ENCODE measurements at regions of chr1 and their contacts with region 1.

Region 1: GRCh38 chr1:229856009-229856650 is 210.9 kb upstream of the GALNT2 start:
- DNase-seq: peak; percentile 55
- ATAC-seq: peak; percentile 99
- H3K4me3 Mint-ChIP-seq: peak overlapping the region; percentile 90
- H3K27ac Mint-ChIP-seq: peak overlapping the region; percentile 97
- H3K4me1 Mint-ChIP-seq: peaks cover 36% of the 10 kb centered on the region
- H3K27me3 Mint-ChIP-seq: no peaks in the 10 kb centered on the region
- CTCF ChIP-seq: no peak

Region 2: DNA sequence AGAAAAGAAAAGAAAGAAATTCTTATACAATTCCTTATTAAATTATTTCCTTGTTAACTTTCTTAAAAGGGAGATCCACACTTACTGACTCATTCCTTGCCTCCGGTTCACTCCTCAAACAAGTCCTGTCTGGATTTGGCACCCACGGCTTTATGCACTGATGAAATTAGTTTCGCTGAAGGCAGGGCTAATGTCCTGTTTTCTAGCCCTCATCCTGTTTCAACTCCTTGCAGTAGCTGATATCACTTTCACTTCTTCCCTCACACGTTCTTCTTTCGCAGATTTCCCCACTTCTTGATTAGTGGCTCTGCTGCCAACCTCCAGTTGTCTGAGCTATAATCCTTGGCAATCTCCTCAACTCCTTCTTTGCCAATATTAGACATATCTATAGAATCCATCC is 14.9 kb before region 1 on chr1:
- CTCF ChIA-PET with region 1: interaction called, 4 read pairs
- POLR2A ChIA-PET with region 1: interaction called, 3 read pairs
- intact Hi-C with region 1: loop called (anchors 2 kb)
- DNase-seq: no peak
- ATAC-seq: peak; percentile 34
- H3K4me3 Mint-ChIP-seq: peak overlapping the region; percentile 32
- H3K27ac Mint-ChIP-seq: peak overlapping the region; percentile 64
- H3K4me1 Mint-ChIP-seq: peaks cover 43% of the 10 kb centered on the region
- H3K27me3 Mint-ChIP-seq: peaks cover 11% of the 10 kb centered on the region
- CTCF ChIP-seq: no peak

Region 3: DNA sequence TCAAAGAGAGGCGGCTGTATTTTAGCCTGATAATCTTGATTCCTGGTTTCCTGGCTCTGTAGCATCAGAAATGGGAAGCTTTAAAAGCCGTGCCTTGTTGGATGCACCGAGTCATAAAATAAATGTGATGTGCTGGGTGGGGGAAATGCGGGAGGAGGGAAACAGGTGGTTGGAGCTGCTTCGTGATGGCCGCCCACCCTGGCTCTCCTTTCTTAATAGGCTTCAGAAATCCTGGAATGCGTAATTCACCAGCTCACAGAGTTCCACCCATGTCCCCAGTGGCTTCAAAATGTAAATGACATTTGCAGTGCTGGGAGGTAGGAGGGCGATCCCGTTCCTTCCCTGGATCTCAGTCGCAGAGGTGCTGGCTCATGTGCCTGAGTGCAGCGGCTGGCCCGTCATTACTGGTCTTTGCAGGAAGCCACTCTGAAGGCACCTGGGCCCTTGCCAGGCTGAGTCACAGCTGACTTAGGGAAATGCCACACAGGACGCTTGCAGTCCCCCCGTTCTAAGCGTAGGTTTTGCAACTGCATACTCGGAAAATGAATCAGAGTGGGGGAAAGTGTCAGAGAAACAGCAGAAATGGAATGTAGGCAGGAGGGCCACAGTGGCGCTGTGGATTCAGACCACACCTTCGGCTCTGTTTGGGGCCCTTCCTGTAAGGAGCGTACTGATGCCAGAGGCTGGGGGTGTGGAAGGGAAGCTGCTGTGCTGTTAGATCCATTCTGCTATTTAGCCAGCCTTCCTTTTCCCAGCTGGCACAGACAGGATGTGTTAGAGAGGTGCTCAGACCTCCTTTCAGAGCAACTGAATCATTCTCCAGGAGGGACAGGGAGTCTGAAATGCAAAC is 248.5 kb after region 1 on chr1:
- CTCF ChIA-PET with region 1: no interaction called
- POLR2A ChIA-PET with region 1: no interaction called
- intact Hi-C with region 1: loop called (anchors 10 kb)
- DNase-seq: peak; percentile 50
- ATAC-seq: peak; percentile 90
- H3K4me3 Mint-ChIP-seq: peak overlapping the region; percentile 63
- H3K27ac Mint-ChIP-seq: peak overlapping the region; percentile 70
- H3K4me1 Mint-ChIP-seq: peaks cover 82% of the 10 kb centered on the region
- H3K27me3 Mint-ChIP-seq: no peaks in the 10 kb centered on the region
- CTCF ChIP-seq: no peak